ENCODE measurements at regions of chr17 and their contacts with region 1.

Region 1: GRCh38 chr17:28041068-28041843 is 1.2 kb upstream of the NLK start:
- DNase-seq: peak; percentile 99 to 100 (median 100)
- ATAC-seq: peak; percentile 93 to 97 (median 95)
- H3K4me3 ChIP-seq: peak overlapping the region; percentile 71 to 97 (median 76)
- H3K27ac ChIP-seq: peak overlapping the region; percentile 76 to 84 (median 80)
- H3K4me1 ChIP-seq: peaks cover 0 to 30% (median 24%) of the 10 kb centered on the region in 3 donors
- H3K27me3 ChIP-seq: no peaks in the 10 kb centered on the region
- CTCF ChIP-seq: no peak

Region 2: DNA sequence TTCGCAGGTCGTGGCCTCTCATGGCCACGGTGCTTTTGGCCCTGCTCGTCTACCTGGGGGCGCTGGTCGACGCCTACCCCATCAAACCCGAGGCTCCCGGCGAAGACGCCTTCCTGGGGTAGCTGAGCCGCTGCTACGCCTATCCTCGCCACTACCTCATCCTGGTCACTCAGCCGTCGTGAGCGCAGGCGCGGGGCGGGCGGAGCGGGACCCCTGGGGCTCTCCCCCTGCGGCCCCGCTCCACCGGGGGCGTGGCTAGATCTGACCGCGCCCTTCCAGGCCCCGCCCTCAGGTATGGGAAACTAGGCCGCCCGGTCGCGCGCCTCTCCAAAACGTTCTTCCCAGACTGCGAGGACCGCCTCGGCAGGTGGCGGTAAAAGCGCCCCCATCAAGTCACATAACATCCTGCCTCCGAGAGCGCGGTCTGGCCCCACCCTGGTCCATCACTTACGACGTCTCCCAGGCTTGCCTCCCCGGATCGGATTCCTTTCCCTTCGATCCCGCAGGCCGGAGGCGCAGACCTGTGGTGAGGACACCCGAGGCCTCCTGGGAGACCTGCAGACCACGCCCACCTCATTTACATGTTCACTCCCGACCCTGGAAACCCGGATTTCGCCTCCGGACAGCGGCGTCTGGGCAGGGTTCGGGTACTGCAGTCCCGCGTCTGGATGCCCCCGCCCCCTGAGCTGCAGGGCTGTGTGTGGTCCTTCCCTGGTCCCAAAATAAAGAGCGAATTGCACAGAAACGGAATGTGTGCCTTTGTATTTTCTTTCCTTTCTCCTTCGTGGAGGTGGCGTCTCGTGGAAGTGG is 186.3 kb after region 1 on chr17:
- intact Hi-C with region 1: loop called in 1 of 3 experiments (anchors 10 kb)
- DNase-seq: peak; percentile 94 to 98 (median 96)
- ATAC-seq: peak; percentile 83 to 93 (median 86)
- H3K4me3 ChIP-seq: peak overlapping the region; percentile 18 to 60 (median 42)
- H3K27ac ChIP-seq: peak overlapping the region; percentile 61 to 98 (median 84)
- H3K4me1 ChIP-seq: peaks cover 0 to 13% (median 0%) of the 10 kb centered on the region in 3 donors
- H3K27me3 ChIP-seq: no peaks in the 10 kb centered on the region
- CTCF ChIP-seq: no peak

Region 3: GRCh38 chr17:28247671-28248555 is 206.7 kb after region 1 on chr17:
- intact Hi-C with region 1: no loop called
- DNase-seq: no peak
- ATAC-seq: no peak
- H3K4me3 ChIP-seq: no peak overlapping the region
- H3K27ac ChIP-seq: no peak overlapping the region
- H3K4me1 ChIP-seq: peaks cover 0 to 5% (median 0%) of the 10 kb centered on the region in 3 donors
- H3K27me3 ChIP-seq: no peaks in the 10 kb centered on the region
- CTCF ChIP-seq: no peak

Region 4: GRCh38 chr17:28416703-28417311 is 375.6 kb after region 1 on chr17:
- intact Hi-C with region 1: no loop called
- DNase-seq: peak in 4 of 6 donors; percentile 56 to 73 (median 62)
- ATAC-seq: peak; percentile 95 to 100 (median 100)
- H3K4me3 ChIP-seq: no peak overlapping the region
- H3K27ac ChIP-seq: no peak overlapping the region
- H3K4me1 ChIP-seq: no peaks in the 10 kb centered on the region
- H3K27me3 ChIP-seq: no peaks in the 10 kb centered on the region
- CTCF ChIP-seq: peak; percentile 55 to 77 (median 67)

Measured in pancreas (tissue), 10 donors.